Tibial artery (tissue), 4 donors: ENCODE measurements at regions of chr6 and their contacts with region 1.

Region 1: GRCh38 chr6:26372308-26373144 is 7.5 kb downstream of the BTN3A2 start:
- DNase-seq: no peak
- H3K4me3 ChIP-seq: no peak overlapping the region
- H3K27ac ChIP-seq: no peak overlapping the region
- H3K4me1 ChIP-seq: no peaks in the 10 kb centered on the region
- H3K27me3 ChIP-seq: no peaks in the 10 kb centered on the region
- CTCF ChIP-seq: no peak

Region 2: GRCh38 chr6:25971187-25971811 is 401.2 kb before region 1 on chr6:
- intact Hi-C with region 1: no loop called
- DNase-seq: peak; percentile 55 to 78
- H3K4me3 ChIP-seq: no peak overlapping the region
- H3K27ac ChIP-seq: peak overlapping the region; percentile 47 to 62
- H3K4me1 ChIP-seq: peaks cover 0 to 55% (median 40%) of the 10 kb centered on the region in 4 donors
- H3K27me3 ChIP-seq: no peaks in the 10 kb centered on the region
- CTCF ChIP-seq: no peak

Region 3: DNA sequence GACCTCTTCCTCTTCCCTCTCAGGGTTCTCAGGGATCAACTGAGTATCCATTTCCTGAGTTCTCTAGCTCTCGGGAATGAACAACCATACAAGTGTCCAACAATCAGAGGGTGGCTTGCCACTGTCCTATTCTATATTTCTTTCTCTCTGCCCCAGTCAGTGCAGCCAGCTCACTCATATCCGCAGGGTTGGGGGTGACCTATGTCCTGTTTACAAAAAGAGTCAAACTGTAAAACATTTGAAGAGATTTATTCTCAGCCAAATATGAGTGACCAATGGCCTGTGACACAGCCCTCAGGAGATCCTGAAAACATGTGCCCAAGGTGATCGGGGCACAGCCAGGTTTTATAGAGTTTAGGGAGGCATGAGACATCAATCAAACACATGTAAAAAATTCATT is 18.4 kb before region 1 on chr6:
- intact Hi-C with region 1: loop called (anchors 2 kb)
- DNase-seq: no peak
- H3K4me3 ChIP-seq: no peak overlapping the region
- H3K27ac ChIP-seq: no peak overlapping the region
- H3K4me1 ChIP-seq: no peaks in the 10 kb centered on the region
- H3K27me3 ChIP-seq: no peaks in the 10 kb centered on the region
- CTCF ChIP-seq: no peak